ENCODE measurements at regions of chr11 and their contacts with region 1.

Region 1: GRCh38 chr11:56855217-56855616 is 106.7 kb upstream of the OR9G4 start:
- DNase-seq: no peak
- H3K4me3 ChIP-seq: no peak overlapping the region
- CTCF ChIP-seq: no peak
- POLR2A ChIP-seq: no peak

Region 2: GRCh38 chr11:56642339-56642738 is 212.9 kb before region 1 on chr11 and contains the start of gene OR5AP2:
- intact Hi-C with region 1: no loop called
- DNase-seq: no peak
- H3K4me3 ChIP-seq: no peak within 1 kb of the TSS
- CTCF ChIP-seq: no peak
- POLR2A ChIP-seq: no peak
- total RNA-seq, gene OR5AP2: not detected

Region 3: DNA sequence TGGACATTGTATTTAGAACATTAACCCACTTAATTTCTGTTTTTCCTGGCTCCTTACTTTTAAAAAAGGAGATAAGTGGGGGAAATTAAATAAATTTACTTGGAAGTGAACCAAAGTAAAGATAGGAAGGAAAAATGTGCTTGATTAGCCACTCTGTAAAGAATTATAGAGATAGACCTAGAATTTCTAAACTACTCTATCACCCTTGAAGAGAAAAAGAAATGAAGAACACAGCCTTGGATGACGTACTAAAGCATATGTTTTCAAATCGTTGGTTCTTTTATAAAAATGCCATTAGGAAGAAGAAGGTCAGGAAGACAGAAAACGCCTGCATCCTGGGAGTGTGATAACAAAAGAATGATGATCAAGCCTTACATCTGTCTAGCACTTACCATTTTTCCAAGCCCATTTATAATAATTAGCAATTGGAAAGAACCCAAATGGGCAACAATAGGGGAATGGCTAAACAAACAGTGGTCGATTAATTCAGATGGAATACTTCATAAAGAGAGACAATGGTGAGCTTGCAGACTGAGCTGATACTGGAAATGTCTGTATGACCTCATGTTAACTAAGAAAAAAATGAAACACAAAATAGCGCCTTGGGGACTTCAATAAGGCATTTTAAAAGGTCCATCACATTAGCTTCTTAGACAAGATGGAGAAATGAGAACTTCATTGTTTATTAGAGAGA is 245.6 kb after region 1 on chr11:
- intact Hi-C with region 1: loop called (anchors 10 kb)
- DNase-seq: no peak
- H3K4me3 ChIP-seq: no peak overlapping the region
- CTCF ChIP-seq: no peak
- POLR2A ChIP-seq: no peak